IMR-90 (cell line): ENCODE measurements at regions of chr6 and their contacts with region 1.

Region 1: DNA sequence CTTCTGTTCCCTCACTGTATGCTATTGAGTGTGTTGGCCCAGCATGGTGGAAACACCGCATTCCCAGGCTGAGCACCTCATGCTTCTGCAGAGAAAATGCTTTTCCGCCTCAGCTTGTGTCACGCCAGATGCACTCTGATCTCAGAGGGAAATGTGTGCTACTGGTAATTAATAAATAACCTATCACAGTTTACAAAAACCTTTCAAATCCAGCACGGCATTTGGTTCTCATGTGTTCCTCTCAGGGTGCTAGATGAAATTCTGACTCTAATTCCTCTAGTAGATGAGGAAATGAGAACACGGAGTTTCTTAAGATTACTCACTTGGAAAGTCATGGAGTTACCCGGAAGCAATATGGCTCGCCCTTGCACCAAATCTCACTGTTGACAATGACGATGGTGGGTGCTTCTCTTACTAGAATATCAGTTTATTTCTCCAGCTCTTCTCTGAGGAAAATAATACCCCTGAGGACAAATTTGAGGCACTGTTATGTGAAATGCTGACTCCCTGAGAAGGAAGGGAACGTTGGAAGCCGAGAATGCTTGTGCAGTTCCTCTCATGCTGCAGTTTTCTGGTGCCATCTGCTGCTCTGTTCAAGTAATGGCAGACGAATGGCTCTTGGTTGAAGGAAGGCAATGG is 116.6 kb downstream of the RNF144B start:
- DNase-seq: peak; percentile 85
- ATAC-seq: peak; percentile 86
- H3K4me3 ChIP-seq: no peak overlapping the region
- H3K27ac ChIP-seq: no peak overlapping the region
- H3K4me1 ChIP-seq: peaks cover 15% of the 10 kb centered on the region
- H3K27me3 ChIP-seq: no peaks in the 10 kb centered on the region
- CTCF ChIP-seq: peak; percentile 96
- POLR2A ChIP-seq: peak; percentile 55; the same call in 1 of the 2 replicates
- RAD21 ChIP-seq: peak; percentile 100

Region 2: DNA sequence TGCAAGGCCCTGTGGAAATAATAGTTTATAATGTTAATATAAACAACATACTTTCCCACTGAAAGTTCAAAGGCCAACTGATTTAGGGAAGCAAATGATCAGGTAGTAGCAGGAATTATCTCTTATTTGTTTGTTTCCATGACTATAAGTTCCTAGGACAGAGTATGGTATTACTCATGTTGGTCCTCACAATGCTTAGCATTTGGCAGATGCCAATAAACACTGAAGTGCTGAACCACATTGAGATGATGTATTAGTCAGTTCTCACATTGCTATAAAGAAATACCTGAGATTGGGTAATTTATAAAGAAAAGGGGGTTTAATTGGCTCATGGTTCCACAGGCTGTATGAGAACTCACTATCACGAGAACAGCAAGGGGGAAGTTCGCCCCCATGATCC is 667.4 kb before region 1 on chr6:
- CTCF ChIA-PET with region 1: no interaction called
- POLR2A ChIA-PET with region 1: no interaction called
- dilution Hi-C with region 1: no loop called
- in situ Hi-C with region 1: no loop called
- intact Hi-C with region 1: loop called (anchors 5 kb)
- DNase-seq: no peak
- ATAC-seq: no peak
- H3K4me3 ChIP-seq: no peak overlapping the region
- H3K27ac ChIP-seq: no peak overlapping the region
- H3K4me1 ChIP-seq: peaks cover under 1% of the 10 kb centered on the region; the same call in 1 of the 2 replicates
- H3K27me3 ChIP-seq: no peaks in the 10 kb centered on the region
- CTCF ChIP-seq: no peak
- POLR2A ChIP-seq: no peak
- RAD21 ChIP-seq: no peak

Region 3: GRCh38 chr6:17987576-17988421 is 515.9 kb before region 1 on chr6 and contains the start of gene KIF13A:
- CTCF ChIA-PET with region 1: no interaction called
- POLR2A ChIA-PET with region 1: no interaction called
- dilution Hi-C with region 1: no loop called
- in situ Hi-C with region 1: no loop called
- intact Hi-C with region 1: loop called (anchors 10 kb)
- DNase-seq: peak; percentile 59
- ATAC-seq: peak; percentile 87
- H3K4me3 ChIP-seq: peak within 1 kb of the TSS; percentile 84
- H3K27ac ChIP-seq: peak within 1 kb of the TSS; percentile 85
- H3K4me1 ChIP-seq: peaks cover 10% of the 10 kb centered on the region
- H3K27me3 ChIP-seq: no peaks in the 10 kb centered on the region
- CTCF ChIP-seq: peak; percentile 41
- POLR2A ChIP-seq: no peak
- RAD21 ChIP-seq: peak; percentile 35
- total RNA-seq, gene KIF13A: 51.8 and 53.0 TPM in 2 replicates

Region 4: DNA sequence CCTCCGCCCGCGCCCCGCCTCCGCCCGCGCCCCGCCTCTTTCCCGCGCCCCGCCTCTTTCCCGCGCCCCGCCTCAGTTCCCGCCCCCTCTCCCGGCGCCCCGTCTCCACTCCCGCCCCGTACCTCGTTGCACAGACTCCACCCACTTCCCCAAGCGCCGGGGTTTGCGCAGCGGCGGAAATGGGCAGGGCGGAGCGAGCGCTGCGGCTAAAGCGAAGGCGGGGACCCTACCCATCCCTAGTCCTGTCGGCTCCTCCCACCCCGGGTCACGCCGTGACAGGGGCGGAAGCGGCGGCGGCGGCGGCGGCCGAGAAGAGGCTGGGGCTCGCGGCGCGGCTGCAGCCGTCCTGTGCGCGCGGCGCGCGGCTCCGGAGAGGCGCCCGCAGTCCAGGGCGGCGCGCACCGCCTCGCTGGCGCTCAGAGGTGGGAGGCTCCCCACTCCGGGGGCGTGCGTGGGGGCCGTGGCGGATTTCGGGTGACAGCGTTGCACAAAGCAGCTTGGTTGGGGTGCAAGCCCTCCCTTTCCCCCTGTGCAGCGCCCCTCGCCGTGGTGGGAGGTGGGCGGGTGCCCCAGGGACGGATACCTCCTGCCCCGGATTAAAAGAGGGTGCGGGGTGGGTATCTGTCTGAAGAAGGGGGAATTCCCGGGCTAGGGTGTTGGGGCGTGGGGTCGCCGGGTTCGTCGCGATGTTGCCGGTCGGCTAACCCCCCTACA is 348.4 kb before region 1 on chr6 and contains the start of gene KDM1B:
- CTCF ChIA-PET with region 1: no interaction called
- POLR2A ChIA-PET with region 1: no interaction called
- dilution Hi-C with region 1: no loop called
- in situ Hi-C with region 1: no loop called
- intact Hi-C with region 1: loop called (anchors 2 kb)
- DNase-seq: peak; percentile 98
- ATAC-seq: peak; percentile 98
- H3K4me3 ChIP-seq: peak within 1 kb of the TSS; percentile 99
- H3K27ac ChIP-seq: peak within 1 kb of the TSS; percentile 84
- H3K4me1 ChIP-seq: peaks cover 3% of the 10 kb centered on the region
- H3K27me3 ChIP-seq: no peaks in the 10 kb centered on the region
- CTCF ChIP-seq: no peak
- POLR2A ChIP-seq: peak; percentile 52; the same call in 1 of the 2 replicates
- RAD21 ChIP-seq: no peak
- total RNA-seq, gene KDM1B: 16.7 and 16.9 TPM in 2 replicates

Region 5: DNA sequence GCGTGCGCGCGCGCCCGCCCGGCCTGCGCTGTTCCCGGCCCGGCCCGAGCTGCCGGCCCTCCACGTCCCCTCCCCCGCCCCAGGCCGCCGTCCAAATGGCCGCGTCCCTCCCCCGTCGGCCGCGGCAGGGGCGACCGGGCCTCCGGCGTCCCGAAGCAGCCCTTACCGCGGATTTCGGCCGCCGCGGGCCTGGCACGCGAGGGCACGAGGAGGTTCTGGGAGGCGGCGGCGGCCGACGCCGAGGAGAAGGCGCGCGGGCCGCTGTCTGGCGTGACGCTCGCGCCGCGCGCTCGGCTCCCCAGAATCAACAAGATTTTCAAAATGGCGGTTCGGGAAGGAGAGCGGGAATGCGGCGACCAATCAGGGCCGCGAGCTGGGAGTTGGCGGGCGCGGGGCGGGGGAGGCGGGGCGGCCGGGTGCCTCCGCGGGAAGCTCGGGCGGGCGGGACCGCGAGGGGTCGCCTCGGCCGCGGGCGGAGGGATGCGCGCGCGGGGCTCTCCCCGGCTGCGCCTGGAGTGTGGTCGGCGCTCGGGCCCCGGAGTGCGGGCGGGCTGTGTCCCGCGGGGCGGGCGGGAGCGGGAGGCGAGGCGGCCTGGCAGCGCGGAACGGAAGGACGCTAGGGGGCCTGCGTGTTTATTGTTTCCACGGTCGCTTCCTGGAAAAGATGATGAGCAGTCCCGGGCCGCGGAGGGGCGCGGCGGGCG is 239.3 kb before region 1 on chr6 and contains the start of gene DEK:
- CTCF ChIA-PET with region 1: no interaction called
- POLR2A ChIA-PET with region 1: no interaction called
- dilution Hi-C with region 1: no loop called
- in situ Hi-C with region 1: no loop called
- intact Hi-C with region 1: loop called (anchors 1 kb)
- DNase-seq: peak; percentile 81
- ATAC-seq: peak; percentile 86
- H3K4me3 ChIP-seq: peak within 1 kb of the TSS; percentile 98
- H3K27ac ChIP-seq: peak within 1 kb of the TSS; percentile 95
- H3K4me1 ChIP-seq: peaks cover 15% of the 10 kb centered on the region
- H3K27me3 ChIP-seq: no peaks in the 10 kb centered on the region; the same call in 1 of the 2 replicates
- CTCF ChIP-seq: peak; percentile 63
- POLR2A ChIP-seq: peak; percentile 65
- RAD21 ChIP-seq: peak; percentile 43
- total RNA-seq, gene DEK: 33.5 and 82.8 TPM in 2 replicates

Region 6: GRCh38 chr6:18323935-18324705 is 179.6 kb before region 1 on chr6:
- CTCF ChIA-PET with region 1: interaction called, 32 read pairs
- POLR2A ChIA-PET with region 1: no interaction called
- dilution Hi-C with region 1: no loop called
- in situ Hi-C with region 1: no loop called
- intact Hi-C with region 1: loop called (anchors 1 kb)
- DNase-seq: peak; percentile 61
- ATAC-seq: peak; percentile 88
- H3K4me3 ChIP-seq: no peak overlapping the region
- H3K27ac ChIP-seq: no peak overlapping the region
- H3K4me1 ChIP-seq: peaks cover 2% of the 10 kb centered on the region; the same call in 1 of the 2 replicates
- H3K27me3 ChIP-seq: no peaks in the 10 kb centered on the region
- CTCF ChIP-seq: peak; percentile 77
- POLR2A ChIP-seq: no peak
- RAD21 ChIP-seq: peak; percentile 84

Region 7: GRCh38 chr6:18387061-18387721 is 116.5 kb before region 1 on chr6 and contains the start of gene RNF144B:
- CTCF ChIA-PET with region 1: interaction called, 6 read pairs
- POLR2A ChIA-PET with region 1: no interaction called
- dilution Hi-C with region 1: no loop called
- in situ Hi-C with region 1: no loop called
- intact Hi-C with region 1: loop called (anchors 2 kb)
- DNase-seq: peak; percentile 61
- ATAC-seq: peak; percentile 91
- H3K4me3 ChIP-seq: peak within 1 kb of the TSS; percentile 68
- H3K27ac ChIP-seq: no peak within 1 kb of the TSS; the same call in 1 of the 2 replicates
- H3K4me1 ChIP-seq: peaks cover 7% of the 10 kb centered on the region
- H3K27me3 ChIP-seq: no peaks in the 10 kb centered on the region; the same call in 1 of the 2 replicates
- CTCF ChIP-seq: no peak
- POLR2A ChIP-seq: no peak
- RAD21 ChIP-seq: peak; percentile 7; the same call in 1 of the 2 replicates
- total RNA-seq, gene RNF144B: 2.7 and 2.8 TPM in 2 replicates